Ascending aorta (tissue), 2 donors: ENCODE measurements at regions of chr4 and their contacts with region 1.

Region 1: DNA sequence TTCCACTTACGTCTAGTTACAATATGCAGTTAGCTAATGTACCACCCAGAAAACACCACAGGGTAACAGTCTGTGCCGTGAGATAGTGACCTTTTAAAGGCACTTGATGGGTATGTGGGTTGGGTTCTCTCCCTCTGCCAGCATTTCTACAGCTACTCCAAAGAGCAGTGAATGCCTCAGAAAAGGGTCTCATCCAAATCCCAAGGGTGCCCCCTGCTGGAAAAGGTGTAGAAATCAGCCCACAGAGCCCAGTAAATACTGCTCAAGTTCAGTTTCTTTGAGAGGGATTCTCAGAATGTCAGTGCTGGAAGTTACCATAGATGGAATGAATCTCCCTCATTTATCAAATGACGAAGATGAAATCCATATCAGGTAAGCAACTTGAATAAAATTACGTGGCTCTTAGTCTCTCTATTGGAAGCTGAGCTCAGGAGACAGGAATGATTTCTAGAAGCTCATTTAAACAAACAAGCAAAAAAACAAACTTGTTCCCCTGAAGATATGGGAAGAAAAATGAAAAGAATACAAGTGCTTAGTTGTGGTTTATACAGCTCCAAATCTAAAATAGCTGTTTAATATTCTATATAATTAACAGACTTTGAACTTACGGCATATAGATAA is 9.5 kb downstream of the RNF175 start:
- DNase-seq: peak in 1 of 2 donors; percentile 78
- H3K4me3 ChIP-seq: no peak overlapping the region
- H3K27ac ChIP-seq: no peak overlapping the region
- H3K4me1 ChIP-seq: peaks cover 0 to 4% of the 10 kb centered on the region in 2 donors
- H3K27me3 ChIP-seq: no peaks in the 10 kb centered on the region
- CTCF ChIP-seq: peak; percentile 65 to 81 (median 79)

Region 2: DNA sequence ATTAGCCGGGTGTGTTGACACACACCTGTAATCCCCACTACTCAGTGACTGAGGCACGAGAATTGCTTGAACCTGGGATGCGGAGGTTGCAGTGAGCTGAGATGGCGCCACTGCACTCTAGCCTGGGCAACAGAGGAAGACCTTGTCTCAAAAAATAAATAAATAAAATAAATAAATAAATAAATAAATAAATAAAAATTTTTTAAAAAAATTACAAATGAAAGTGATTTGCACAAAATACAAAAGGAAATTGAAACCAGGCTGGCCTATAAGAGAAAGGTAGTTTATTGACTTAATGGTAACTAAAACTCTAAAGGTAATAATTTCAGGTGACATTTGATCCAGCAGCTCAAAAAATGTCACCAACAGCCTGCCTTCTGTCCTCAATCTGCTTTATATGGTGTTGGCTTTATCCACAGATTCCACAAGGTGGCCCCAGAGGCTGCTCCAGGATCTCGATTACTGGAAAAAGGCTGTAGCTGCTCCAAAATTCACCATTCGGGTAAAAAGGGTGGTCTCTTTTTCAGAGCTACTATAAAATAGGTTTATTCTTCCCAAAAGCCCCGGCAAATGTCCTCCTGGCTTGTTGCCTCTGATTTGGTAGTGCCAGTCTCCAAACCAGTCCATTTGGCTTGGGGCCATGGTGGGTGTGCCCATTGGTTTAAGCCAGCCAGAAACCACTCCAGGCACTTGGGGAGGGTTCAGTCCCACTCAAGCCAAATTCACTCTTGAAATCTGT is 607.4 kb before region 1 on chr4:
- intact Hi-C with region 1: loop called (anchors 10 kb)
- DNase-seq: peak in 1 of 2 donors; percentile 82
- H3K4me3 ChIP-seq: peak overlapping the region in 1 of 2 donors; percentile 40
- H3K27ac ChIP-seq: no peak overlapping the region
- H3K4me1 ChIP-seq: no peaks in the 10 kb centered on the region
- H3K27me3 ChIP-seq: no peaks in the 10 kb centered on the region
- CTCF ChIP-seq: peak; percentile 71 to 89 (median 81)

Region 3: DNA sequence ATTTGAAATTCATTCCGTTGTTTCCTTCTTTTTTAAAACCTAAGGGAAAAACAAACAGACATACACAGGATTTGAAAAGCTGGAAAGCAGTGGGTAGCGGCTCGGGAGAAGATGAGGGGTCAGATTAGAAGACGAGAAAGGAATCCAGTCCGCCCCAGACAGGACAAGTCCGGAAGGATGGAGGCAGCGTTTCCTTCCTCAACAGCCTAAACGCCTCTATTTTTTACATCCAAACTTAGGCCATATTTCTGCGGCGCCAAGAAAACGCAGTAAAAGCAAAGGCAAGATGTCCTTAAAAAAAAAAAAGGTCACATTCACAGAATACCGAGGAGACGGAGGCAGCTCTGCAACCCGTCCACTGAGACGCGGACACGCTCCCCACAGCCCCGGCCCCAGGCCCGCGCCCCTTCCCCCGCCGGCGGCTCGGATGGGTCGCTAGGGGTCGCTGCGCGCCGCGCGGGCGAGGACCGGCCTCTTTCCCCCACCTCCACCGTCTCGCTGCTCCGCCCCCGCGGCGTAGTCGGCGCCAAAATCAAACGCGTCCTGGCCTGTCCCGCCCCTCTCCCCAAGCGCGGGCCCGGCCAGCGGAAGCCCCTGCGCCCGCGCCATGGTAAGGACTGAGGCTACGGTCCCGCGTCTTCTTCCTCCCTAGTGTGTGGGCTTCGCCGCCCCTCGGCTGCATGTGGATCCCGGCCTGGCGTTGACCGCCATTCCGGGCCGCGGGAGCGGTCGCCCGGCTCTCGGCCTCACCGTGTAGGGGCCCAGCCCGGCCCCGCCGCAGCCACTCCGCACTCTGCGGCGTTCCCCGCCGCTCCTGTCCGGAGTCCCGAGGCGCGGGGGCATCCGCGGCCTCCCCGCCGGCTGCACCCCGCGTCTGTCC is 405.9 kb before region 1 on chr4 and contains the start of gene MND1:
- intact Hi-C with region 1: loop called (anchors 2 kb)
- DNase-seq: peak; percentile 22 to 88
- H3K4me3 ChIP-seq: peak within 1 kb of the TSS; percentile 67 to 87
- H3K27ac ChIP-seq: peak within 1 kb of the TSS in 1 of 2 donors; percentile 17
- H3K4me1 ChIP-seq: peaks cover 0 to 4% of the 10 kb centered on the region in 2 donors
- H3K27me3 ChIP-seq: no peaks in the 10 kb centered on the region
- CTCF ChIP-seq: peak; percentile 81 to 99 (median 97)
- total RNA-seq, gene MND1: not detected

Region 4: GRCh38 chr4:153466081-153466948 is 284.0 kb before region 1 on chr4 and contains the start of gene TMEM131L:
- intact Hi-C with region 1: no loop called
- DNase-seq: peak in 1 of 2 donors; percentile 79
- H3K4me3 ChIP-seq: peak within 1 kb of the TSS; percentile 73 to 99
- H3K27ac ChIP-seq: peak within 1 kb of the TSS; percentile 68 to 81
- H3K4me1 ChIP-seq: peaks cover 3 to 13% of the 10 kb centered on the region in 2 donors
- H3K27me3 ChIP-seq: no peaks in the 10 kb centered on the region
- CTCF ChIP-seq: peak in 2 of 3 experiments; percentile 16 to 33
- total RNA-seq, gene TMEM131L: 6.9 TPM

Region 5: DNA sequence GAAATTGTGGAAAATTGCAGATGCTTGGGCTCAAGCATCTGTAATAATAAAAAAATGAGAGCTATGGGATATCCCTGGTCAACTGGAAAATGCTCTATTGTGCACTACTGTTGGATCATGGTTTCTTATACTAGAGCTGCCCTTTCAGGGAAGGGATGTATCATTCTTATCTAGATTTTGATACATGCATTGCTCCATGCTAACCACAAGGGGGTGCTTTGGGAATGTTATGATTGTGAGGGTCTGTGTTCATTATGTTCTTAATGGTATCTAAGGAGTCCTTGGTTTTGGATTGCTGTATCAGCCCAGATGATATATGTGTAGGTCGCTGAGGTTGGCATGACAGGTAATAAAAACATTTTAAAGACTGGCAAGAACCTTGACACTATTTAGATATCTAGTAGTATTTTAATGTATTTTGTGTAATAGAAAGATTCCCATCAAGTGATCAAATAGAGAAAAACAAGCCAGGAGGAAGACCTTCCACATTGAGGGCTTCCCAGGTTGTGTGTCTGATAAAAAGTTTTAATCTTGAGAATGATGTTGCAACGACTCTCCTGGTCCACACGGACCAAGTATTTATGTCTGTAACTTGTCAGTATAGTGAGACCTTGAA is 115.5 kb before region 1 on chr4:
- intact Hi-C with region 1: loop called (anchors 1 kb)
- DNase-seq: no peak
- H3K4me3 ChIP-seq: no peak overlapping the region
- H3K27ac ChIP-seq: no peak overlapping the region
- H3K4me1 ChIP-seq: no peaks in the 10 kb centered on the region
- H3K27me3 ChIP-seq: no peaks in the 10 kb centered on the region
- CTCF ChIP-seq: peak; percentile 63 to 77 (median 64)

Region 6: GRCh38 chr4:153684182-153684970 is 65.9 kb before region 1 on chr4 and contains the start of gene TLR2:
- intact Hi-C with region 1: loop called (anchors 5 kb)
- DNase-seq: peak; percentile 22 to 87
- H3K4me3 ChIP-seq: peak within 1 kb of the TSS; percentile 63 to 69
- H3K27ac ChIP-seq: peak within 1 kb of the TSS; percentile 39 to 52
- H3K4me1 ChIP-seq: no peaks in the 10 kb centered on the region
- H3K27me3 ChIP-seq: no peaks in the 10 kb centered on the region
- CTCF ChIP-seq: no peak
- total RNA-seq, gene TLR2: 19.1 TPM